ENCODE measurements at regions of chr9 and their contacts with region 1.

Region 1: DNA sequence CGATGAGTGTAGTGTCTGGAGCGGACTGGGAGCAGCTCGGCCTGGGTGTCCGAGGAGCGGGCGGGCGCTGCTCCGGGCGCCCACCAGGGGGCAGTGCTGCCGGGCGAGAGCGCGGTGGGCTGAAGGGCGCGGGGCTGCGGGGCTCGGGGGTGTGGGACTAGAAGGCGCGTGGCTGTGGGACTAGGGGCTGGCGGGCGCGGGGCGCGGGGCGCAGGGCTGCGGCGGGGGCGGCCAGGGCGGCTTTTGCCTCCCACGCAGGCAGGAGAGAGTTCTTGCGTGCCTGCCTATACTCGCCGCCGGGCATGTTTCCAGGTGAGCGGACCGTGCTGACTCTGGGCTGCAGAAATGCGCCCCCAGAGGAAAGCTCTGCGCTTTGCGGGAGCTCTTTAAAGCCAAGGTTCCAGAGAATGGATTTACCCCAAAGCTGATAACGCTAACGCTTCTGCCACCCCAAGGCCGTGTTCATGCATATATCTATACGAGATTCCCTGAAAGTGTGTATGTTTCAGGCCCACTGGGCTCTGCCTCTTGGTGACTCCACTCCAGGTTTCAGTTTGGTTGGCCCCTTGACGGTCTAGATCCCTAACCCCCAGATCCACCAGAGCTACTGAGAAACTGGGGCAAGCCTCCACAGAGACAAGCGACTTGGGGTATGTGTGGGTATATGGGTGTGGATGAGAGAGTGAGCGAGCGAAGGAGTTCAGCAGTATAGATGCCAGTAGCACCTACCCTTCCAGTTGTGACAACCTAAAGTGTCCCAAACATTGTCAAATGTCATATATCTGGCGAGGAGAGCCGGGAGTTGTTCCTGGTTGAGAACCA is 56.2 kb downstream of the ACER2 start:
- DNase-seq: peak; percentile 67
- ATAC-seq: peak; percentile 96
- H3K4me3 ChIP-seq: peak overlapping the region; percentile 74
- H3K27ac ChIP-seq: no peak overlapping the region
- H3K4me1 ChIP-seq: no peaks in the 10 kb centered on the region
- H3K27me3 ChIP-seq: no peaks in the 10 kb centered on the region
- CTCF ChIP-seq: peak; percentile 72

Region 2: DNA sequence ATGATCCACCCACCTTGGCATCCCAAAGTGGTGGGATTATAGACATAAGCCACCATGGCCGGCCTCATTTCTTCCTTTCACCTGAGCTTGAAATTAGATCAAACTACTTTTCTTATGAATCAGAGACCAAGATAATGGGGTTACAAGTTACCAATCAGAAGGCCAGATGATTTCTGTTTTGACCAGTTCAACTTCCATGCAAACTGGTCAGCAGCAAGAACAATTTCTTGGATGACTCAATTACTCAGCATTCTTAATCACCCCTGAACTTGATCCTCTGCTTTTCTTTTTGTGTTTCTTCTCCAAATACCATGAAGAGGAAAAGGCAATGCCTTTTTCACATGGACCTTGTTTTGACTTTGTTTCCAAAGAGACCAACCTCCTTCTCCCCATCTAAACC is 327.7 kb before region 1 on chr9:
- CTCF ChIA-PET with region 1: no interaction called
- POLR2A ChIA-PET with region 1: no interaction called
- intact Hi-C with region 1: no loop called
- DNase-seq: peak; percentile 50
- ATAC-seq: no peak; the same call in 1 of the 2 replicates
- H3K4me3 ChIP-seq: no peak overlapping the region
- H3K27ac ChIP-seq: no peak overlapping the region
- H3K4me1 ChIP-seq: peaks cover 5% of the 10 kb centered on the region; the same call in 1 of the 2 replicates
- H3K27me3 ChIP-seq: no peaks in the 10 kb centered on the region
- CTCF ChIP-seq: no peak

Region 3: DNA sequence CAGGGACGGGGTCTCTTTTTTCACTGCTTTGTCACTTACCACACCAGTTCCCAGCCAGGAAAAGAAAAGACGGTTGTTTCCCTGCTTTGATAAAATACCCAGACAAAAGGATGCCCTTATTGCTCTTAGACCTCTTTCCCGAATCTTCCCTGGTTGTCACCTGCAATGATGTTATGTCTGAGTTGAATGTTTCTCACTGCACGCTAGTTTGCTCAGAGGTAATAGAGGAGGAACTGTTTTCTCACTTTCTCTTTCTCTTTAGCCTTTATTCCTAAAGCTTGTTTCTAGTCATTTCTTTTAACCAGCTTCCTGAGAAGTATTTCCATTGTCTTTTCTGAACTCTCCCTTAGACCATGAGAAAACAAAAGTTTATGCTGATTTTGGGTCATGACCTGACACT is 23.2 kb before region 1 on chr9:
- CTCF ChIA-PET with region 1: no interaction called
- POLR2A ChIA-PET with region 1: no interaction called
- intact Hi-C with region 1: no loop called
- DNase-seq: no peak
- ATAC-seq: no peak
- H3K4me3 ChIP-seq: no peak overlapping the region
- H3K27ac ChIP-seq: no peak overlapping the region
- H3K4me1 ChIP-seq: no peaks in the 10 kb centered on the region
- H3K27me3 ChIP-seq: no peaks in the 10 kb centered on the region
- CTCF ChIP-seq: no peak

Region 4: DNA sequence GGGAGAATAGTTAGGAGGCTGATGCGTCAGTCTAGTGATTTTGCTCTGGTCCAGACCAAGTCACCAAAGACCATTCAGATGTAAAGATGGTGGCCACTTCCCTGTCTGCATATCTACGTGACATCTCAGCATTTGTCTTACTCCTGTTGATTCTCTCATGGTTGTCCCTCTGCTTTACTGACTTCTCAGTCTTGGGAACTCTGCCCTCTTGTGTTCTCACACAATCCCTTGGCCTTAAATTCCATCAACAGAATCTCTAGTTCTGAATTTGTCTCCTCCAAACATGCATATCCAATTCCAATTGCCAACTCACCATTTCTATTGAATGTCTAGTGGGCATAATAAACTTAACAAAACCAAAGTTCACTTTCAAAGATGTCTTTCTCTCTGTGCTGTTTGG is 176.1 kb after region 1 on chr9:
- CTCF ChIA-PET with region 1: interaction called, 3 read pairs
- POLR2A ChIA-PET with region 1: no interaction called
- intact Hi-C with region 1: loop called (anchors 5 kb)
- DNase-seq: peak; percentile 3
- ATAC-seq: no peak
- H3K4me3 ChIP-seq: no peak overlapping the region
- H3K27ac ChIP-seq: no peak overlapping the region
- H3K4me1 ChIP-seq: no peaks in the 10 kb centered on the region
- H3K27me3 ChIP-seq: peaks cover 34% of the 10 kb centered on the region; the same call in 1 of the 2 replicates
- CTCF ChIP-seq: peak; percentile 23; the same call in 1 of the 2 replicates